Activated naive CD4-positive, alpha-beta T cell treated with anti-CD3 and anti-CD28 coated beads, Interleukin-2, amount 10 ng/mL, durations not matched to agents 7 days and 5 days (primary cell): ENCODE measurements at regions of chr19 and their contacts with region 1.

Region 1: DNA sequence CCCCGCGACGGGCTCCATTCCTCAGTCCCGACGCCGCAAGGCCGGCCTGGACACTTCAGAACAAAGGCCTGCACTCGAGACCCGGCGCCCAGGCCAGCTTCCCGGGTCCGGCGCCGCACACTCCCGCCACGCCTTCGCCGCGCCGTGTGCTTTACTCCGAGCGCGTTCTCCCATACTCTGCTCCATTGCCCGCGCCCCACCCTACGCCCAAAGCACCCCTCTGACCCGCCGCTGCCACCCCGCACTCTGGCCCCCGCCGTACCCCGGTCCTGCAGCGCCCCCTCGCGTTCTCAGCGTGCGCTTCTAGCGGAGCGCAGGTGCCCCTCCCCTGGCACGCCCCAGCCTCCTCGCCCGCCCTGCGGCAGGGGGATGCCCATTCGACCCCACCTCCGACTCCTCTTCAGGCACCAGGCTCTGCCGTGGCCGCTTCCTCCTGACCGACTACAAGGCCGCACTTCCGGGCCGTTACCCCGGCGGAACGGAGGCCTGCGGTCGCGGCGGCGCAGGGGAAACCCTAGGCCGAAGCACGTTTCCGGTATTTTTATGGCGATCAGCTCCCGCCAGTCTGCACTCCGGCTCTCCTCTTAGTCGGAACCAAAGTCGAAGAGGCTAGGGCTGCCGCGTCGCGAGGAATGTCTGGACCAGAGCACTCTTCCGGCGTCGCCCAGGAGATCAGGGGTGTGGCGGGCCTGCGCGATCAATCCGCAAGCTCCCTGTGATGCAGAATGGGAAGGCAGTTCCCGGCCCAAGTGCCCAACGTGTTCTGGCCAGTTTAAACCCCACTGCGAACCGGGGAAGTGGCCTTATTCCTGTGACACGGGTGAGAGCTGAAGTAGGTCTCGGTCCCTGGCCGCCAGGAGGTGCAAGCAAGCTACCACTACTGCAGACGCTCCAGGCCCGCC is at the start of gene ZBTB45:
- DNase-seq: peak; percentile 92
- H3K4me3 Mint-ChIP-seq: peak within 1 kb of the TSS; percentile 91
- H3K27ac Mint-ChIP-seq: peak within 1 kb of the TSS; percentile 98
- H3K4me1 Mint-ChIP-seq: peaks cover 45% of the 10 kb centered on the region
- H3K27me3 Mint-ChIP-seq: peaks cover 6% of the 10 kb centered on the region

Region 2: GRCh38 chr19:58372311-58373133 is 147.1 kb before region 1 on chr19:
- CTCF ChIA-PET with region 1: no interaction called
- DNase-seq: no peak
- H3K4me3 Mint-ChIP-seq: no peak overlapping the region
- H3K27ac Mint-ChIP-seq: no peak overlapping the region
- H3K4me1 Mint-ChIP-seq: no peaks in the 10 kb centered on the region
- H3K27me3 Mint-ChIP-seq: no peaks in the 10 kb centered on the region

Region 3: GRCh38 chr19:58554494-58555368 is 35.1 kb after region 1 on chr19 and contains the start of gene CHMP2A:
- CTCF ChIA-PET with region 1: interaction called, 21 read pairs
- DNase-seq: peak; percentile 98
- H3K4me3 Mint-ChIP-seq: peak within 1 kb of the TSS; percentile 96
- H3K27ac Mint-ChIP-seq: peak within 1 kb of the TSS; percentile 94
- H3K4me1 Mint-ChIP-seq: peaks cover 54% of the 10 kb centered on the region
- H3K27me3 Mint-ChIP-seq: no peaks in the 10 kb centered on the region

Region 4: DNA sequence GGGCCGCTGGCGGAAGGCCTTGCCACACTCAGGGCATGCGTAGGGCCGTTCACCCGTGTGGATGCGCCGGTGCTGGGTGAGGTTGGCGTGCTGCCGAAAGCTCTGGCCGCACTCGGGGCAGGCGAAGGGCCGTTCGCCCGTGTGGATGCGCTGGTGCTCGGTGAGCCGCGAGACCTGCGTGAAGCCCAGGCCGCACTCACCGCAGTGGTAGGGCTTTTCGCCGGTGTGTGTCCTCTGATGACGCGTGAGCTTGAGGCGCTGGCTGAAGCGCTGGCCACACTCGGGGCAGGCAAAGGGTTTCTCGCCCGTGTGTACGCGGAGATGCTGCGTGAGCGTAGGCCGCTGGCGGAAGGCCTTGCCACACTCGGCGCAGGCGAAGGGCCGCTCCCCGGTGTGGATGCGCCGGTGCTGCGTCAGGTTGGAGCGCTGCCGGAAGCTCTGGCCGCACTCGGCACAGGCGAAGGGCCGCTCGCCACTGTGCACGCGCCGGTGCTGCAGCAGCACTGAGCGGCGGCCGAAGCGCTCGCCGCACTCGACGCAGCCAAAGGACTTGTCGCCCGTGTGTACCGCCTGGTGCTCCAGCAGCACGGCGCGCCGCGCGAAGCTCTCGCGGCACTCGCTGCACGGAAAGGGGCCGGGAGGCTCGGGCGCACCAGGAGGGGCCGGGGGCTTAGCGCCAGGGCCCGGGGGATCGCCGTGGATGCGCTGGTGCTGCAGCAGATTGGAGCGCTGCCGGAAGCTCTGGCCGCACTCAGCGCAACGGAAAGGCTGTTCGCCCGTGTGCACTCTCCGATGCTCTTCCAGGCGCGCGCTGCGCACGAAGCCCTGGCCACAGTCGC is 42.8 kb after region 1 on chr19:
- CTCF ChIA-PET with region 1: interaction called, 20 read pairs
- DNase-seq: peak; percentile 64
- H3K4me3 Mint-ChIP-seq: peak overlapping the region; percentile 83
- H3K27ac Mint-ChIP-seq: peak overlapping the region; percentile 94
- H3K4me1 Mint-ChIP-seq: peaks cover 59% of the 10 kb centered on the region
- H3K27me3 Mint-ChIP-seq: peaks cover 8% of the 10 kb centered on the region

Region 5: DNA sequence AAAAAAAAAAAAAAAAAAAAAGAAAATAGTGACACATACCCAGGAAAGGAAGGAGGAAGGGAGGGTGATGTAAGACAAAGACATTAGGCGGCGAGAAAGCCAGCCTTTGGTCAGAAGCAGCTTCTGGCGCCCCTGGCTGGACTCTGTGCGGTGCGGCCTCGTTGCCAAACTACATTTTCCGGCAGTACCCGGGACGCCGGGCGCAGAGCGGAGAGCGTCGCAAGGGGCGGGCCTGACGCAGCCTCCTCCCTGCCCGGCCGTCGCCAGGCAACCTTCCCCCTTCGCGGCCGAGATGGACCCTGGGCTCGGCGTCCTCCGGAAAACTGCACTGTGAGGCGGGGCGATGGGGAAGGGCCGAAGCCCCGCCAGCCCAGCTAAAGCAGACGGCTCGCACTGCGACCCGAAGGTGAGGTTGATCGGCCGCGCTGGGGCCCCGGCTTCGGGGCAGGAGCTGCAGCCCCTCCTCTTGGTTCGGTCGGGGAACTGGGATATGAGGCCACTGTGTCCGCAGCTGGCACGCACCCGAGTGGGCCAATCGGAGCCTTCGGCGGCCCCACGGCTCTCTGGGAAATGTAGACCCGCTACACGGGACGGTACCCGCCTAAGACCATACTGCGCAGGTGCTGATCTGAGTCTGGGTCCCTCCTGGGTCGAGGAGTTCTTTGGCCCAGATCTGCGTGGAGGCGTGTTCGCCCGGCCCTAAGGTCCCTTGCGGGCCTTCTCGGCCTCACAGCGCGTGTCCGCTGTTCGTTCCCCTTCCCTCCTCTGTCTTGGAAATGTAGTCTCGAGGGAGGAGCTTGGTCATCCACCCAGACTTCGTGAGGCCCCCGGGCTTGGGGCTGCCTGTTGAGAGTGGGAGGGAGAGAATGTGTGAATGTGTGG is 55.8 kb after region 1 on chr19:
- CTCF ChIA-PET with region 1: interaction called, 109 read pairs
- DNase-seq: peak; percentile 87
- H3K4me3 Mint-ChIP-seq: peak overlapping the region; percentile 81
- H3K27ac Mint-ChIP-seq: peak overlapping the region; percentile 99
- H3K4me1 Mint-ChIP-seq: peaks cover 51% of the 10 kb centered on the region
- H3K27me3 Mint-ChIP-seq: no peaks in the 10 kb centered on the region